ENCODE measurements at regions of chr15 and their contacts with region 1.

Region 1: GRCh38 chr15:89206908-89207331 is 14.5 kb downstream of the RLBP1 start:
- DNase-seq: peak; percentile 73 to 78
- H3K4me3 ChIP-seq: no peak overlapping the region
- H3K27ac ChIP-seq: no peak overlapping the region
- H3K4me1 ChIP-seq: peaks cover 0 to 7% of the 10 kb centered on the region in 2 donors
- H3K27me3 ChIP-seq: no peaks in the 10 kb centered on the region
- CTCF ChIP-seq: peak; percentile 80 to 98 (median 88)
- POLR2A ChIP-seq: no peak

Region 2: DNA sequence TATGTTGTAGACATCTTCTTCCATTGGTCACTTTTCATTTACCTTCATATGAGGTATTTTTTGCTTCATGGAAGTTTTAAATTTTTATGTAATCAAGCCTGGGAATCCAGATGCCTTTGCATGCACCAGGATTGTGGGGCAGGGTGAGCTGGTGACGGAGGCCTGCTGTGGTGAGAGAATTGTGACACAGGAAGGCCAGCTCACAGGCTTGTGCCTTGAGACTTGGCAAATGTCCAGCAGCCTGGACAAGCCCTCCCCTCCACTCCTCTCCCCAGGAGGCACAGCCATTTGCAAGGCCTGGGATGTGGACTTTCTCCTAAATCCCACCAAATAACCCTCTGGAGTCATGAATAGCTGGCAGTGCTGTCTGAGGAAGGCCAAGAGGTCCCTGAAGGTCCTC is 222.1 kb after region 1 on chr15:
- intact Hi-C with region 1: loop called (anchors 5 kb)
- DNase-seq: no peak
- H3K4me3 ChIP-seq: no peak overlapping the region
- H3K27ac ChIP-seq: no peak overlapping the region
- H3K4me1 ChIP-seq: peaks cover 0 to 8% of the 10 kb centered on the region in 2 donors
- H3K27me3 ChIP-seq: no peaks in the 10 kb centered on the region
- CTCF ChIP-seq: no peak
- POLR2A ChIP-seq: no peak

Measured in thyroid gland (tissue), 4 donors.